ENCODE measurements at regions of chr17 and their contacts with region 1.

Region 1: GRCh38 chr17:27569257-27569722 is 61.7 kb upstream of the LGALS9 start:
- DNase-seq: peak; percentile 89
- H3K4me3 ChIP-seq: no peak overlapping the region
- H3K4me3 Mint-ChIP-seq: no peak overlapping the region
- H3K27ac Mint-ChIP-seq: peak overlapping the region; percentile 83
- H3K4me1 ChIP-seq: peaks cover 54% of the 10 kb centered on the region
- H3K4me1 Mint-ChIP-seq: peaks cover 42% of the 10 kb centered on the region
- H3K27me3 ChIP-seq: no peaks in the 10 kb centered on the region
- H3K27me3 Mint-ChIP-seq: no peaks in the 10 kb centered on the region
- CTCF ChIP-seq: peak; percentile 97 to 98

Region 2: GRCh38 chr17:27552469-27552779 is 16.9 kb before region 1 on chr17:
- CTCF ChIA-PET with region 1: interaction called, 4 read pairs
- POLR2A ChIA-PET with region 1: no interaction called
- intact Hi-C with region 1: loop called (anchors 1 kb)
- DNase-seq: peak; percentile 69 to 83
- H3K4me3 ChIP-seq: no peak overlapping the region
- H3K4me3 Mint-ChIP-seq: peak overlapping the region; percentile 18
- H3K27ac Mint-ChIP-seq: peak overlapping the region; percentile 86
- H3K4me1 ChIP-seq: peaks cover 47% of the 10 kb centered on the region
- H3K4me1 Mint-ChIP-seq: peaks cover 39% of the 10 kb centered on the region
- H3K27me3 ChIP-seq: no peaks in the 10 kb centered on the region
- H3K27me3 Mint-ChIP-seq: no peaks in the 10 kb centered on the region
- CTCF ChIP-seq: no peak

Region 3: GRCh38 chr17:27593232-27593856 is 24.1 kb after region 1 on chr17:
- CTCF ChIA-PET with region 1: no interaction called
- POLR2A ChIA-PET with region 1: interaction called, 3 read pairs
- intact Hi-C with region 1: loop called (anchors 1 kb)
- DNase-seq: peak in 1 of 2 experiments; percentile 55
- H3K4me3 ChIP-seq: no peak overlapping the region
- H3K4me3 Mint-ChIP-seq: no peak overlapping the region
- H3K27ac Mint-ChIP-seq: no peak overlapping the region
- H3K4me1 ChIP-seq: no peaks in the 10 kb centered on the region; the same call in 1 of the 2 replicates
- H3K4me1 Mint-ChIP-seq: no peaks in the 10 kb centered on the region
- H3K27me3 ChIP-seq: no peaks in the 10 kb centered on the region
- H3K27me3 Mint-ChIP-seq: no peaks in the 10 kb centered on the region
- CTCF ChIP-seq: peak in 1 of 2 experiments; percentile 55

Region 4: DNA sequence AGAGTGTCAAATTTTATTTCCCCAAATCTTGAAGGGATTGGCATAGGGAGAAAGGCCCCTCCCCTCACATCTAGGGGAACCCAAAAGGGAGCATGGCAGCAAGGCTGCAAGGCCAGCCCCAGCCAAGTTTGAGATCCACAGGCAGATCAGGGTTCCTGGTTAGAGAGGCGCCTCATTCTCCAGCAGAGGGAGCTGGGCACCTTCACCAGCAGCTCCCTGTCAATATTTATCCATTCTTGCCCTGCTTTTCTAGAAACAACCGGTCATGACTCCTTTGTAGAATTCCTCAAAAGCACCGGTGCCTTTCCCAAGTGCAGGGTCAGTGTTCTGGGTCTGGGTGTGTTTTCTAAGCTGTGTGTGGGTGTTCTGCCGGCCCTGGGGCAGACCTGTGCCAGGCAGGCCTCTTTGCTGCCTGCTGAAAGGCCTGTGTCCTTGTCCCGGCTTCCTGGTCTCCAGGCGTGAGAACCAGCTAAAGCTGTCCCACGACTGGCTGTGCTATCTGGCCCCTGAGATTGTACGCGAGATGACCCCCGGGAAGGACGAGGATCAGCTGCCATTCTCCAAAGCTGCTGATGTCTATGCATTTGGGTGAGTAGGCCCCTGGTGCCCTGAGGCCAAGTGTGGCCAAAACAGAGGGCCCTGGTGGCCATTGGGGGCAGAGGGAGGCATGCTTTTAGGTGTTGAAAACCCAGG is 40.5 kb after region 1 on chr17:
- CTCF ChIA-PET with region 1: no interaction called
- POLR2A ChIA-PET with region 1: no interaction called
- intact Hi-C with region 1: no loop called
- DNase-seq: peak; percentile 75 to 79
- H3K4me3 ChIP-seq: no peak overlapping the region
- H3K4me3 Mint-ChIP-seq: no peak overlapping the region
- H3K27ac Mint-ChIP-seq: no peak overlapping the region
- H3K4me1 ChIP-seq: no peaks in the 10 kb centered on the region
- H3K4me1 Mint-ChIP-seq: no peaks in the 10 kb centered on the region
- H3K27me3 ChIP-seq: no peaks in the 10 kb centered on the region
- H3K27me3 Mint-ChIP-seq: no peaks in the 10 kb centered on the region
- CTCF ChIP-seq: peak; percentile 84 to 99

Region 5: GRCh38 chr17:27654654-27655524 is 85.6 kb after region 1 on chr17:
- CTCF ChIA-PET with region 1: no interaction called
- POLR2A ChIA-PET with region 1: no interaction called
- intact Hi-C with region 1: no loop called
- DNase-seq: peak; percentile 97 to 98
- H3K4me3 ChIP-seq: no peak overlapping the region
- H3K4me3 Mint-ChIP-seq: no peak overlapping the region
- H3K27ac Mint-ChIP-seq: no peak overlapping the region
- H3K4me1 ChIP-seq: no peaks in the 10 kb centered on the region
- H3K4me1 Mint-ChIP-seq: peaks cover 8% of the 10 kb centered on the region
- H3K27me3 ChIP-seq: no peaks in the 10 kb centered on the region
- H3K27me3 Mint-ChIP-seq: peaks cover 3% of the 10 kb centered on the region
- CTCF ChIP-seq: peak; percentile 99 to 100

Measured in Caco-2 (cell line).